ENCODE measurements at regions of chr11 and their contacts with region 1.

Region 1: GRCh38 chr11:6353367-6353987 is 33.2 kb upstream of the CAVIN3 start:
- DNase-seq: peak; percentile 51
- H3K4me3 ChIP-seq: no peak overlapping the region
- H3K27ac ChIP-seq: no peak overlapping the region
- H3K4me1 ChIP-seq: peaks cover 9% of the 10 kb centered on the region
- H3K27me3 ChIP-seq: peaks cover 4 to 8% of the 10 kb centered on the region in 2 experiments
- CTCF ChIP-seq: peak; percentile 84 to 95
- POLR2A ChIP-seq: no peak

Region 2: DNA sequence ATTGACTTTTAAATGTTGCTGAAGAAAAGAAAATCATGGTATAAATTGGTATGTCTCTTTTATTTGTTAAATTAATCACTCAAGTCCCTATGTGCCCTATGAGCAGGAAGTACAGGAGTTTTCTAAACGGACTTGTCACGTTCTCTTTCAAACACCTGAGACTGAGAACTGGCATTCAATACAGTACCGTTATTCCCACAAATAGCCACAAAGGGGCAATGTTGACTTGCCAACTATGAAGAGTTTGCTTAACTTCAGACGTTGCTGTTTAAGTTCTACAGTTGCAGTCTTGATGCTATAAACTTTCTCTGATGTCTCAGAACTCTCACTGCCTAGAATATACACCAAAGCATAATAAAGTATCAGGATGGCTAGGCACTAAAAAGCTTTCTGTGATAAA is 330.5 kb before region 1 on chr11:
- CTCF ChIA-PET with region 1: interaction called, 35 read pairs
- POLR2A ChIA-PET with region 1: no interaction called
- dilution Hi-C with region 1: no loop called
- intact Hi-C with region 1: loop called (anchors 2 kb)
- DNase-seq: peak; percentile 70
- H3K4me3 ChIP-seq: no peak overlapping the region
- H3K27ac ChIP-seq: no peak overlapping the region
- H3K4me1 ChIP-seq: no peaks in the 10 kb centered on the region
- H3K27me3 ChIP-seq: peaks cover 5 to 9% of the 10 kb centered on the region in 2 experiments
- CTCF ChIP-seq: peak; percentile 36 to 46
- POLR2A ChIP-seq: no peak

Region 3: DNA sequence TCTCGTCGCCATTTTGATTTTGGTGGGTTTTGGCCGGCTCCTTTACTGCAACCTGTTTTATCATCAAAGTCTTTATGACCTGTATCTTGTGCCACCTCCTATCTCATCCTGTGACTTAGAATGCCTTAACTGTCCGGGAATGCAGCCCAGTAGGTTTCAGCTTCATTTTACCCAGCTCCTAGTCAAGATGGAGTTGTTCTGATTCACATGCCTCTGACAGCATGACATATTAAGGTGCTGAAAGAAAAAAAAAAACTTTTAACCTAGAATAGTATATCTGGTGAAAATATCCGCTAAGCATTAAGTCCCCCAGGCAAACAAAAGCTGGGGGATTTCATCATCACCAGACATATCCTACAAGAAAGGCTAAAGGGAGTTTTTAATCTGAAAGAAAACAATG is 192.4 kb before region 1 on chr11:
- CTCF ChIA-PET with region 1: no interaction called
- POLR2A ChIA-PET with region 1: no interaction called
- dilution Hi-C with region 1: no loop called
- intact Hi-C with region 1: no loop called
- DNase-seq: no peak
- H3K4me3 ChIP-seq: no peak overlapping the region
- H3K27ac ChIP-seq: no peak overlapping the region
- H3K4me1 ChIP-seq: no peaks in the 10 kb centered on the region
- H3K27me3 ChIP-seq: no peaks in the 10 kb centered on the region
- CTCF ChIP-seq: no peak
- POLR2A ChIP-seq: no peak

Region 4: GRCh38 chr11:6298605-6299004 is 54.9 kb before region 1 on chr11:
- CTCF ChIA-PET with region 1: interaction called, 61 read pairs
- POLR2A ChIA-PET with region 1: no interaction called
- dilution Hi-C with region 1: no loop called
- intact Hi-C with region 1: loop called (anchors 1 kb)
- DNase-seq: peak; percentile 32
- H3K4me3 ChIP-seq: no peak overlapping the region
- H3K27ac ChIP-seq: no peak overlapping the region
- H3K4me1 ChIP-seq: no peaks in the 10 kb centered on the region
- H3K27me3 ChIP-seq: peaks cover 0 to 2% of the 10 kb centered on the region in 2 experiments
- CTCF ChIP-seq: peak; percentile 58 to 83
- POLR2A ChIP-seq: no peak

Region 5: GRCh38 chr11:6321961-6322362 is 31.5 kb before region 1 on chr11:
- CTCF ChIA-PET with region 1: interaction called, 31 read pairs
- POLR2A ChIA-PET with region 1: no interaction called
- dilution Hi-C with region 1: no loop called
- intact Hi-C with region 1: loop called (anchors 1 kb)
- DNase-seq: peak; percentile 68
- H3K4me3 ChIP-seq: no peak overlapping the region
- H3K27ac ChIP-seq: peak overlapping the region; percentile 83
- H3K4me1 ChIP-seq: peaks cover 48% of the 10 kb centered on the region
- H3K27me3 ChIP-seq: no peaks in the 10 kb centered on the region
- CTCF ChIP-seq: no peak
- POLR2A ChIP-seq: peak; percentile 65

Measured in endothelial cell of umbilical vein (primary cell).